ENCODE measurements at regions of chr4 and their contacts with region 1.

Region 1: GRCh38 chr4:56575820-56576429 is 70.3 kb downstream of the ARL9 start:
- DNase-seq: peak in 5 of 9 donors; percentile 7 to 36 (median 14)
- ATAC-seq: peak; percentile 38
- H3K4me3 ChIP-seq: no peak overlapping the region
- H3K4me3 Mint-ChIP-seq: no peak overlapping the region
- H3K27ac ChIP-seq: no peak overlapping the region
- H3K27ac Mint-ChIP-seq: no peak overlapping the region
- H3K4me1 ChIP-seq: no peaks in the 10 kb centered on the region
- H3K4me1 Mint-ChIP-seq: peaks cover 0 to 6% (median 0%) of the 10 kb centered on the region in 7 donors
- H3K27me3 ChIP-seq: no peaks in the 10 kb centered on the region
- H3K27me3 Mint-ChIP-seq: peaks cover 0 to 10% (median 0%) of the 10 kb centered on the region in 5 donors

Region 2: GRCh38 chr4:56480691-56481090 is 95.2 kb before region 1 on chr4:
- CTCF ChIA-PET with region 1: no interaction called
- POLR2A ChIA-PET with region 1: no interaction called
- intact Hi-C with region 1: no loop called
- DNase-seq: no peak
- ATAC-seq: no peak
- H3K4me3 ChIP-seq: no peak overlapping the region
- H3K4me3 Mint-ChIP-seq: no peak overlapping the region
- H3K27ac ChIP-seq: no peak overlapping the region
- H3K27ac Mint-ChIP-seq: no peak overlapping the region
- H3K4me1 ChIP-seq: no peaks in the 10 kb centered on the region
- H3K4me1 Mint-ChIP-seq: peaks cover 0 to 6% (median 0%) of the 10 kb centered on the region in 7 donors
- H3K27me3 ChIP-seq: no peaks in the 10 kb centered on the region
- H3K27me3 Mint-ChIP-seq: no peaks in the 10 kb centered on the region

Region 3: DNA sequence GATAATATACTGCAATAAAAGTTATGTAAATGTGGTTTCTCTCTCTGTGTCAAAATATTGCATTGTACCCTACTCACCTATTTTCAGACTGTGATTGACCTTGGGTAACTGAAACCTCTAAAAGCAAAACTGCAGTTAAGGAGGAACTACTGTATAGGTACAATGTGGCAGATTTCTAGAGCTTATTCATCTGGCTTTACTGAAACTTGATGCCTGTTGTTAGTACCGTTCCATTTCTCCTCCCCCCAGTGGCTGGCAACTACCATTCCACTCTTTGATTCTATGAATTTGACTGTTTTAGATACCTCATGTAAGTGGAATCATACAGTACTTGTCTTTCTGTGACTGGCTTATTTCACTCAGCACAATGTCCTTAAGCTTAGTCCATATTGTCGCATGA is 43.2 kb after region 1 on chr4:
- CTCF ChIA-PET with region 1: no interaction called
- POLR2A ChIA-PET with region 1: no interaction called
- intact Hi-C with region 1: loop called in 1 of 2 experiments (anchors 5 kb)
- DNase-seq: no peak
- ATAC-seq: no peak
- H3K4me3 ChIP-seq: no peak overlapping the region
- H3K4me3 Mint-ChIP-seq: no peak overlapping the region
- H3K27ac ChIP-seq: no peak overlapping the region
- H3K27ac Mint-ChIP-seq: no peak overlapping the region
- H3K4me1 ChIP-seq: no peaks in the 10 kb centered on the region
- H3K4me1 Mint-ChIP-seq: peaks cover 0 to 4% (median 0%) of the 10 kb centered on the region in 7 donors
- H3K27me3 ChIP-seq: no peaks in the 10 kb centered on the region
- H3K27me3 Mint-ChIP-seq: peaks cover 0 to 13% (median 9%) of the 10 kb centered on the region in 5 donors

Measured in naive thymus-derived CD4-positive, alpha-beta T cell (primary cell).